CD4-positive, alpha-beta T cell (primary cell): ENCODE measurements at regions of chr12 and their contacts with region 1.

Region 1: GRCh38 chr12:25130741-25131188 is 64.2 kb downstream of the DNAI7 start:
- DNase-seq: peak in 3 of 14 experiments; percentile 61 to 66 (median 61)
- ATAC-seq: peak; percentile 29
- H3K4me3 ChIP-seq: no peak overlapping the region
- H3K4me3 Mint-ChIP-seq: no peak overlapping the region
- H3K27ac ChIP-seq: no peak overlapping the region
- H3K27ac Mint-ChIP-seq: no peak overlapping the region
- H3K4me1 ChIP-seq: no peaks in the 10 kb centered on the region
- H3K4me1 Mint-ChIP-seq: no peaks in the 10 kb centered on the region
- H3K27me3 ChIP-seq: peaks cover 0 to under 1% of the 10 kb centered on the region in 2 experiments
- H3K27me3 Mint-ChIP-seq: no peaks in the 10 kb centered on the region
- CTCF ChIP-seq: peak; percentile 87

Region 2: GRCh38 chr12:23204933-23205778 is 1925.6 kb before region 1 on chr12:
- CTCF ChIA-PET with region 1: no interaction called
- POLR2A ChIA-PET with region 1: no interaction called
- intact Hi-C with region 1: loop called (anchors 2 to 5 kb)
- DNase-seq: peak in 4 of 14 experiments; percentile 5 to 59 (median 51)
- ATAC-seq: no peak
- H3K4me3 ChIP-seq: no peak overlapping the region
- H3K4me3 Mint-ChIP-seq: no peak overlapping the region
- H3K27ac ChIP-seq: no peak overlapping the region
- H3K27ac Mint-ChIP-seq: no peak overlapping the region
- H3K4me1 ChIP-seq: no peaks in the 10 kb centered on the region
- H3K4me1 Mint-ChIP-seq: no peaks in the 10 kb centered on the region
- H3K27me3 ChIP-seq: no peaks in the 10 kb centered on the region
- H3K27me3 Mint-ChIP-seq: no peaks in the 10 kb centered on the region
- CTCF ChIP-seq: peak; percentile 96

Region 3: DNA sequence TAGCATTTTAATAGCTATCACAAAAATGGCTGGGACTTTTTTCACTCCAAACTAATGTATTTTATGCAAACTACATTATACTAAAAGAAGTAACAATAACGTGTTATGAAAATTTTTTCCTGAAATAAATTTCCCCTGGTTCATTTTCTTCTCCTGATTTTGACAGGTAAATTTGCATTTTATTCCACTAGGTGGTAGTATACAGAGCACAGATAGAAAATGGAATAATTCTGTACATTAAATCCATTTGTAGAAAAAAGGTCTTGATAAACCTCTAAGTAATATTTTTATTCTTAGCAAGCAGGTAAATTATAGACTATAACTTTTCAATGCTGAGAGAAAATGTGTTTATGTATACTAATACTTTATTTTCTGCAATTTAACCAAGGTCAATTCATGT is 278.3 kb before region 1 on chr12:
- CTCF ChIA-PET with region 1: no interaction called
- POLR2A ChIA-PET with region 1: no interaction called
- intact Hi-C with region 1: loop called in 1 of 2 experiments (anchors 5 kb)
- DNase-seq: no peak
- ATAC-seq: no peak
- H3K4me3 ChIP-seq: no peak overlapping the region
- H3K4me3 Mint-ChIP-seq: no peak overlapping the region
- H3K27ac ChIP-seq: no peak overlapping the region
- H3K27ac Mint-ChIP-seq: no peak overlapping the region
- H3K4me1 ChIP-seq: no peaks in the 10 kb centered on the region
- H3K4me1 Mint-ChIP-seq: no peaks in the 10 kb centered on the region
- H3K27me3 ChIP-seq: no peaks in the 10 kb centered on the region
- H3K27me3 Mint-ChIP-seq: peaks cover 4% of the 10 kb centered on the region
- CTCF ChIP-seq: peak; percentile 31

Region 4: DNA sequence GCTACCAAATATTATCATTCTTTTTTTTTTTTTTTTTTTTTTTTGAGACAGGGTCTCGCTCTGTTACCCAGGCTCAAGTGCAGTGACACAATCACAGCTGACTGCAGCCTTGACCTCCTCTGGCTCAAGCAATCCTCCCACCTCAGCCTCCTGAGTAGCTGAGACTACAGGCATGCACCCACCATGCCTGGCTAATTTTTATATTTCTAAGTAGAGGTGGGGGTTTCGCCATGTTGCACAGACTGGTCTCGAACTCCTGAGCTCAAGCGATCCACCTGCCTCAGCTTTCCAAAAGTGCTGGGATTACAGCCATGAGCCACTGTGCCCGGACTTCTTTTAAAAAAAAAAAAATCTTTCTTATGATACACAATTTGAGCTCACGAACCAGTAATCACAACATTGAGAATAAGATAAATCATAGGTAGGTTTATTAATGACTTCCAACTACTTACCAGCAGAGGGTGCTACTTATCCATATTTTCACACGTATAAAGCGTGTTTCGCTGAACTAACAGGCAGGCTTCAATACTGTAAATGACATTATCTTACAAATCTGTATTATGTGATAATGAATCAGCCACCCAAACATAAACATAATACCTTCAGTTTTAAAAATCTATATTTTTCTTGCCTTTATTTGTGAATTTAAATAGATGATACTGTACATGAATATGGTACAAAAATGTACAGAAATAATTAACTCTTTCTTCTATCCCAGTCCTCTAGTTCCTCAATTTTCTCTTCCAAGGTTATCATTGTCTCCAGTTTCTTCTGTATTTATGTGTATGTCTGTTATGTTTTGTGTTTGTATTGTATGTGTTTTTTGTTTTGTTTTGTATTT is 139.3 kb before region 1 on chr12:
- CTCF ChIA-PET with region 1: interaction called, 7 read pairs
- POLR2A ChIA-PET with region 1: interaction called, 4 read pairs
- intact Hi-C with region 1: loop called (anchors 1 kb)
- DNase-seq: peak in 6 of 14 experiments; percentile 1 to 82 (median 42)
- ATAC-seq: peak; percentile 97
- H3K4me3 ChIP-seq: no peak overlapping the region
- H3K4me3 Mint-ChIP-seq: no peak overlapping the region
- H3K27ac ChIP-seq: no peak overlapping the region
- H3K27ac Mint-ChIP-seq: no peak overlapping the region
- H3K4me1 ChIP-seq: no peaks in the 10 kb centered on the region
- H3K4me1 Mint-ChIP-seq: no peaks in the 10 kb centered on the region
- H3K27me3 ChIP-seq: no peaks in the 10 kb centered on the region
- H3K27me3 Mint-ChIP-seq: no peaks in the 10 kb centered on the region
- CTCF ChIP-seq: peak; percentile 67

Region 5: DNA sequence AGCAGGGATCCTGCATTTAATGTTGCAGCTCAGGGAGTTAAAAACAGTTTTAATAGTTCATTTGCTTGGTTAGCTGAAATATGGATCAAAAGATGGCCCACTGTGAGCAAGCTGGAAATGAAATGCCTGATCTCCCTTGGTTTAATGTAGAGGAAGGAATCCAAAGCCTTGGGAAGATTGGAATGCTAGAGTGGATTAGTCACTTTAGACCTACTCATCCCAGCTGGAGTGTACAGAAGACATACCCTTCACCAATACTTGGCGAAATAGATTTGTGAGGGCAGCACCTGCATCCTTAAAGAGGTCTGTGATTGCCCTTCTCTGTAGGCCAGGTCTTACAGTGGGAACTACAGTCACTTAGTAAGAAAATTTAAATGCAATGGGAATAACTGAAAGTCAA is 178.0 kb after region 1 on chr12:
- CTCF ChIA-PET with region 1: no interaction called
- POLR2A ChIA-PET with region 1: no interaction called
- intact Hi-C with region 1: no loop called
- DNase-seq: no peak
- ATAC-seq: no peak
- H3K4me3 ChIP-seq: no peak overlapping the region
- H3K4me3 Mint-ChIP-seq: no peak overlapping the region
- H3K27ac ChIP-seq: no peak overlapping the region
- H3K27ac Mint-ChIP-seq: no peak overlapping the region
- H3K4me1 ChIP-seq: no peaks in the 10 kb centered on the region
- H3K4me1 Mint-ChIP-seq: no peaks in the 10 kb centered on the region
- H3K27me3 ChIP-seq: no peaks in the 10 kb centered on the region
- H3K27me3 Mint-ChIP-seq: no peaks in the 10 kb centered on the region
- CTCF ChIP-seq: no peak